Left colon (tissue), 2 donors: ENCODE measurements at regions of chr16 and their contacts with region 1.

Region 1: GRCh38 chr16:70770626-70771552 is 30.1 kb downstream of the VAC14 start:
- DNase-seq: peak; percentile 36 to 57
- ATAC-seq: peak; percentile 79

Region 2: GRCh38 chr16:70679666-70680494 is 91.0 kb before region 1 on chr16:
- intact Hi-C with region 1: loop called (anchors 5 to 10 kb)
- DNase-seq: peak in 1 of 2 donors; percentile 21
- ATAC-seq: peak; percentile 51

Region 3: DNA sequence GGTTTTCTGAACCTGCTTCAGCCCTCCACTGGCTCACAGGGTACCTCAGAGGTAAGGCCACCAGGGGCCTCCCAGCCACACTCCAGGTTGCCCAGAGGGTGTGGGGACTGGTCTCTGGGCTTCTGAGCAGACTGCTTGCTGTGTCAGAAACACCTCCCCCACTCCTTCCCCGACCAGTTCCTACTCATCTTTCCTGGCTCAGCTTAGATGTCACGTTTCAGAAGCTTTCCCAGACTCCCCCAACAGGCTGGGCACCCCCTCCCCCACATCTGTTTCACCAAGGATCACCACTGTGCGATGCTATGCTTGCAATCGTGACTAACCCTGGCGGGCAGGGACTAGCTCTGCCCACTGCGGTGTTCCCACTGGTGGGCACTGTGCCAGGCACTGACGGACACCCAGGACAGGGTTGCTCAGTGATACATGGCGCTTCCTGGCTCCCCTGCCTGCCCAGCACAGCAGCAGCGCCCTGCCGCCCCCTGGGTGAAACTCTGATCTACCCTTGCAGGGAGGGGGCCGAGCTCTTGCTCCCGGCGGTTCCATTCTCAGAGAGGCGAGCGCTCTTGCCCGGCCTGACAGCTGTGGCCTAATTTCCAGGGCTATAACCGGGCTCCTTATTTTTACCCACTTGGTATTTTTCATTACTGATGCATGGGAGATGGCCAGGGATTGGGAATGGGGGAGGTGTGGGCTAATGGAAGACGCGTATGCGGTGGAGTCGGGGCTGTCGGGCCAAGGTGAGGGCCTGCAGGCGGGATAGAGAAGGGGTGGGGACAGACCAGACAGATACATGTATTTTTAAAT is 55.6 kb before region 1 on chr16:
- intact Hi-C with region 1: no loop called
- DNase-seq: peak; percentile 48 to 84
- ATAC-seq: peak; percentile 45